WTC11 (cell line): ENCODE measurements at regions of chr3 and their contacts with region 1.

Region 1: DNA sequence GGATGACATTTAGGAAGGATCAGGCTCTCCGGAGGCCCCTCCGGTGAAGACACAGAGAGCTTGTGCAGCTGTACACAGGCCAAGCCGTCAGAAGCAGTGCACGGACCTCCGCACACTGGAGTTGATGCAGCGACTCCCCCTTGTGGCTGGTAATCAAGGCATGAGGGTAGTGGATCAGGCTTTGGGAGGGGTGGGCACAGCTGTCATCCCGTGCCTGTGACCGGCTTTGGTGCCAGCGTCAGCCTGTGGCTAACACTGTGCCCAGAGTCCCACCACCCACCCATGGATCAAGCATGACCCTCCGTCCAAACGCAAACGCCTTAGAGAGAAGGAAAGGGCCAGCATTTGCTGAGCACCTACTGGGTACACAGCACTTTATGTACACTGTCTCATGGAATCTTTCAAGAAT is 8.2 kb upstream of the GRIP2 start:
- DNase-seq: peak; percentile 73
- ATAC-seq: peak; percentile 91
- H3K4me3 Mint-ChIP-seq: no peak overlapping the region
- H3K27ac Mint-ChIP-seq: no peak overlapping the region
- H3K4me1 Mint-ChIP-seq: peaks cover 5% of the 10 kb centered on the region; the same call in 1 of the 2 replicates
- H3K27me3 Mint-ChIP-seq: no peaks in the 10 kb centered on the region; the same call in 1 of the 2 replicates
- CTCF ChIP-seq: peak; percentile 56; the same call in 1 of the 2 replicates

Region 2: DNA sequence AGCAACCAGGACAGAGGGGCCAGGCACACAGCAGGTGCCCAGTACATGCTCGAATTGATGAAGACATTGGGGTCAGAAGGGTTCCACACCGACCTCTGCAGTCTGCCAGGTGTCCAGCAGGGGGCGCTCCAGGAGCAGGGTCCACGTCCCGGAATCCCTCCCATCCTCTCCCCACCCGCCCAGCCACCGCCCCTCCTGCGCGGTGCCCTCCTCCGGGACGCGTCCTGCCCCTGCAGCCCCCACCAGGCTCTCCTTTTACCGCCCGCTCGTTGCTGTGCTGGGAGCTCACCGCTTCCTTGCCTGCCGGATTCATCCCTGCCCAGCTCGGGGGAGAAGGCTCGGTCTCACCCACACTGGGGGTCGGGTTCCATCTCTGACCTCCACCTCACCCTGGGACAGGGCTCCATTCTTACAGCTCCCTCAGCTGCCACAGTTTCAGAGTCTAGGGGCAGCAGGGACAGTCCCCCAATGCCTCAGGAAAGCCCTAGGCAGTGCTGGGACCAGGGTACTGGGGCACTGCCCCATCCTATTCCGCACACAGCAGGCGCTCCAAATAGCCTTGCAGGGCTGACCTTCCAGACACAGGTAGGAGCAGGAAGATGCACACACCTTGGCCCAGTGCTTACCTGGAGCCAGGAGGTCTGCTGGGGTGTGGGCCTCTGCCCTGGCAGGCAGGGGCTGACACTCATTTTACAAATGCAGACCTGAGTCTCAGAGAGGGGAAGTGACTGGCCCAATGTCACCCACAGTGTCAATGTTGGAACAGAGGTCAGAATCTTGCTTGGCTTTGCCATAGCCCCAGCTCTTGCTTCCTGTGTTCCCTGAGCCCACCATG is 39.1 kb before region 1 on chr3:
- CTCF ChIA-PET with region 1: interaction called, 58 read pairs
- POLR2A ChIA-PET with region 1: interaction called, 3 read pairs
- DNase-seq: peak; percentile 95
- ATAC-seq: peak; percentile 86
- H3K4me3 Mint-ChIP-seq: peak overlapping the region; percentile 70
- H3K27ac Mint-ChIP-seq: no peak overlapping the region
- H3K4me1 Mint-ChIP-seq: peaks cover 9% of the 10 kb centered on the region; the same call in 1 of the 2 replicates
- H3K27me3 Mint-ChIP-seq: no peaks in the 10 kb centered on the region; the same call in 1 of the 2 replicates
- CTCF ChIP-seq: peak; percentile 99

Region 3: DNA sequence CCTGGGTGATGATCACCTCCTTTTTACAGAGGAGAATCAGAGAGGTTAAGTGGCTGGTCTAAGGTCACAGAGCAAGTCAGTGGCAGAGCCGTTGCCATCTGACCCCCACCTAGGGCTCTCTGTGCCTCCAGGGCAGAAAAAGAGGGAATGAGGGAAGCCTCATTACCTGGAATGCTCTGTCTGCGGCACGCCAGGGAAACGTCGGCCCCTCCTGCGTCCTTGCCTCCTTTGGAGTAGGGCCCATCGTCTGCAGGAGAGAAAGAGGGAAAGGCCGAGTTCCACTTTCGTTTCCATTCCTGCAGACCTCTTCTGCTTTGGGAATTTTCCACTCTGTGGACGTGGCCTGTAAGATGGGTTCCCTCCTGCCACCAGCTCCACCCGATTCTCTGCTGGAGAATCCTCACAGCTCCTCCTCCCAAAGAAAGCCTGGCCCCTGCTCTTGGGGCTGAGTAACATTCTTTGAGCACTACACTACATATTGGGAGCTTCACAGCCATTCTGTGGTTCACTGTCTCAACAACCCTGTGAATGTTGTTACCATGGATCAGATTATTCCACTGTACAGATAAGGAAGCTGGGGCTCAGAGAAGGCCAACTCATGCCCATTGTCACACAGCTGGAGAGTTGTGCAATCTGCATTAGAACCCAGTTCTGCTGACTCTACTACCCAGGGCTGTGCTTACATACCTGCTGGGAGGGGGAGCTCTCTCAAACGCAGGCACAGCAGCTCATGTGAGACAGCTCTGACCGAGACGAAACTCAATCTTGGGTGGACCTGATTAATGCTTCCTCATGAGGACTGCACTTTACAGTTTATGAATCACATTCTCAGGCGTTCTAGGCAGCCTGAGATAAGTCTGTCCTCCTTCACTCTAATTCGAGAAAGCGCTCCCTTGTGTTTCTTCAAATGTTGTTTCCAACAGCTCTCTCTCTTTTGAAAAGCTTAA is 22.4 kb before region 1 on chr3:
- CTCF ChIA-PET with region 1: interaction called, 105 read pairs
- POLR2A ChIA-PET with region 1: no interaction called
- DNase-seq: no peak
- ATAC-seq: peak; percentile 31
- H3K4me3 Mint-ChIP-seq: no peak overlapping the region
- H3K27ac Mint-ChIP-seq: 0 out of 2 replicates have a peak overlapping the region, but pooled peaks have one; percentile 43
- H3K4me1 Mint-ChIP-seq: peaks cover 22% of the 10 kb centered on the region
- H3K27me3 Mint-ChIP-seq: no peaks in the 10 kb centered on the region; the same call in 1 of the 2 replicates
- CTCF ChIP-seq: no peak

Region 4: GRCh38 chr3:14565868-14566588 is 17.7 kb after region 1 on chr3:
- CTCF ChIA-PET with region 1: interaction called, 16 read pairs
- POLR2A ChIA-PET with region 1: no interaction called
- DNase-seq: no peak
- ATAC-seq: no peak
- H3K4me3 Mint-ChIP-seq: no peak overlapping the region
- H3K27ac Mint-ChIP-seq: no peak overlapping the region
- H3K4me1 Mint-ChIP-seq: peaks cover 34% of the 10 kb centered on the region
- H3K27me3 Mint-ChIP-seq: no peaks in the 10 kb centered on the region
- CTCF ChIP-seq: no peak

Region 5: GRCh38 chr3:14602006-14602803 is 53.9 kb after region 1 on chr3:
- CTCF ChIA-PET with region 1: interaction called, 10 read pairs
- POLR2A ChIA-PET with region 1: no interaction called
- DNase-seq: peak; percentile 65
- ATAC-seq: peak; percentile 63
- H3K4me3 Mint-ChIP-seq: peak overlapping the region; percentile 71
- H3K27ac Mint-ChIP-seq: no peak overlapping the region
- H3K4me1 Mint-ChIP-seq: peaks cover 12% of the 10 kb centered on the region
- H3K27me3 Mint-ChIP-seq: peaks cover 32% of the 10 kb centered on the region
- CTCF ChIP-seq: no peak; the same call in 1 of the 2 replicates